Tibial artery (tissue), 4 donors: ENCODE measurements at regions of chrX and their contacts with region 1.

Region 1: GRCh38 chrX:129606918-129607317 is 47.8 kb downstream of the APLN start:
- DNase-seq: peak in 1 of 2 donors; percentile 33
- H3K4me3 ChIP-seq: no peak overlapping the region
- H3K27ac ChIP-seq: no peak overlapping the region
- H3K4me1 ChIP-seq: peaks cover 0 to 9% (median 0%) of the 10 kb centered on the region in 4 donors
- H3K27me3 ChIP-seq: no peaks in the 10 kb centered on the region
- CTCF ChIP-seq: peak; percentile 52 to 72

Region 2: DNA sequence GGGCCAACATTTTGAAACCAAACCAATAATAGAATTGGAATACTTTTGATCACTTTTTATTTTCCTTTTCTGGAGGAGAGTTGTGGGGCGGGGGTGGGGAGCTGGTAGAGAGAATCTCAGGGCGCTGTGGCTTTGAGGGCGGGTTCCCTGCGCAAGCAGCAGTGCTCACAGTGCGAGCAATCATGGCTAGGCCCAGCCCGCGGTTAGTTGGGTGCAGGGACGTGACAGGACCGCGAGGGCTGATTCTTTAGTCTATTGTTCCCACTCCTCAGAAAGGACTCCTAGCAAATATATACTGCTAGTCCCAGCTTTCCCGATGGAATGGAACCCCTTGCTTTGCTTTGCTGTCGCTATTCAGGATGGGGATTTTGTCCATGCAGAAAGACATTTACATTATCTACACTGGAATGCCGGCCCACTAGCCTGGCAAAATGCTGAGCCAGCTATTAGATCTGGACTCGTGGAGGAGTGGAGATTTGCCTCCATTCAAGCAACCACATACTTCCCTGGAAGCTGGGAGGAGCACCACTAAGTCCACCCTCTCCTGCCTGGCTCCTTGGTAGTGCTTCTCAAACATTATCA is 71.8 kb after region 1 on chrX:
- intact Hi-C with region 1: no loop called
- DNase-seq: no peak
- H3K4me3 ChIP-seq: peak overlapping the region; percentile 42 to 47
- H3K27ac ChIP-seq: peak overlapping the region; percentile 84 to 90
- H3K4me1 ChIP-seq: peaks cover 0 to 8% (median 1%) of the 10 kb centered on the region in 4 donors
- H3K27me3 ChIP-seq: no peaks in the 10 kb centered on the region
- CTCF ChIP-seq: no peak

Region 3: DNA sequence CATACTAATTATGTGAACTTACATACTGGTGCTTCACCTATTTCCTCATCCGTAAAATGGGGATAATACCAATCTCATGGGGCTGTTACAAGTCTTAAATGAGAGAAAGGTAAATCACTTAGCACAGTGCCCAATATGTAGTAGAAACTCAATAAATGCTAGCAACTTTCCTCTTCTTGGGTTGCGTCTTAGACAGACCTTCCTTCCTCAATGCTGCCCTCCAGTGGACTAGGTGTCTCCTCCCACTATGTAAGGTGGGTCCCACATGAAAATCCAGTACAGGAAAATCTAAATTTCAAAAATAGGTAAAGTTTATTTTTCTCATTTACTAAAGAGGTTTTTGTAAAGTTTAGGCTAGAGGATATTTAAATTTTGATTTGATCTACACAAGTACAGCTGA is 216.2 kb after region 1 on chrX:
- intact Hi-C with region 1: loop called (anchors 10 kb)
- DNase-seq: peak in 1 of 2 donors; percentile 26
- H3K4me3 ChIP-seq: no peak overlapping the region
- H3K27ac ChIP-seq: no peak overlapping the region
- H3K4me1 ChIP-seq: no peaks in the 10 kb centered on the region
- H3K27me3 ChIP-seq: no peaks in the 10 kb centered on the region
- CTCF ChIP-seq: peak; percentile 25 to 26

Region 4: DNA sequence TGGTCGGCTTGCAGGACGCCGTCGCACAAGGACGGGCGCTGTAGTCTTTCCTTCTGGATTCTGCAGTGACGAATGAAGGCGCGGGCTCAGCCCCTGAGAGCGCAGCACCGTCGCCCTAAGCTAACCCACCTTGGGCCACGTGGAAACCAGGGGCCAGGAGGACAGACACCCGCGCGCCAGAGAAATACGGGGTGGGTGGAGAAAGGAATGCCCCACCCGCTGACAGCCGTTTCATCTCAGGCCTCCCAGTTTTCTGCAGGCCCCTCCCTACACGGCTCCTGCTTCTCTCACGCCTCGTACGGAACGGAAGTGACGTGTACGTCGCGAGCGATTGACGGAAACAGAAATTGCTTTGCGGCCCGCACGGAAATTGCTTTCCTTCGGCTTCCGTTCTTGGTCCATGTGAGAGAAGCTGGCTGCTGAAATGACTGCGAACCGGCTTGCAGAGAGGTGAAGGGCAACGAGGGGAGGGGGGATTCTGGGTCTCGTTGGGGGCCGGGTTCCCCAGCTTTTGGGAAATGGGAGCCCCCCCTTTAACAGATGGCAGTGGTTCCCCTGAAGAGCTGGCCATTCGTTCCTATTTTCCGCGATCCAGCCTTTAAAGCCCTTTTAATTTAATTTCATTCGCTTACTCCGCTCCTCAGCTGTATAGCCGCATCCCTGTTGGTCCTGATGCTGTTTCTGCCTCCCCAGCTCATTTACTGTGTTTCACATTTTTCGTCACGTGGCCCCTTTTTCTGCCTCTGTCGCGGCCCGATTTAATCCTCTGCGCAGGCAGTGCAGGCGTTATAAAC is 299.1 kb after region 1 on chrX and contains the start of gene UTP14A:
- intact Hi-C with region 1: loop called (anchors 10 kb)
- DNase-seq: peak; percentile 87 to 90
- H3K4me3 ChIP-seq: peak within 1 kb of the TSS; percentile 66 to 75
- H3K27ac ChIP-seq: peak within 1 kb of the TSS; percentile 76 to 83
- H3K4me1 ChIP-seq: peaks cover 0 to 5% (median 0%) of the 10 kb centered on the region in 4 donors
- H3K27me3 ChIP-seq: no peaks in the 10 kb centered on the region
- CTCF ChIP-seq: no peak